Activated T-helper 1 cell treated with anti-CD3 and anti-CD28 coated beads, Interleukin-12 subunit alpha, Interleukin-12 subunit beta, Interleukin-2, Interleukin-4 antibody, amounts not matched to agents 30 ng/mL and 10 ng/mL and 1 ng/mL, durations not matched to agents 14 hours and 24 hours and 36 hours (primary cell): ENCODE measurements at regions of chr3 and their contacts with region 1.

Region 1: DNA sequence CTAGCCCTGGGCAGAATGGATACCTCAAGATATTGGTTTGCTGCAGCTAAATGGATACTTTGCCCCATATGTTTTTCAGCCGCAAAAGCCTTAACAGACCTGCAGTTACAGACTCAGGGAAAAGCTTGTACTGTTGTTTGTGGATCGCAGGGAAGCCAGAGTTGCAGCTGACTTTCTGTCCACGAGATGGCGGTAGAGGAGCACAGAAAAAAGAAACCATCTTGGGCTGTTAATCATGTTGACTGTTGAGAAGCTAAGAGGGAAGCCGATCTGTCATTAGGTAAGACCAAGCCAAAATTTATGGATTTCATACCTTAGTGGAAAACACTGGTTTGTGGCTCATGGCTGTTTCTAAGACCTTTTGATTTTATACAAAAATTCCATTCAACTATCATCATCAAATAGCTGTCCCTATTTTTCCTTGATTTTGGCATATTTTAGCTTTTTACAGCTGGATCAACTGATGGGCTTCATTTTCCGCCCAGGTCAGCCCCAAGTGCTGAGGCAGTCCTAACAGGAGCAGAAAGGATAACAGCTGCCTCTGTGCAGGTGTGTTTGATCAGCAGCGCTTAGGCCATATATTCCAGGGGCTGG is 205.7 kb upstream of the ZPLD1 start:
- DNase-seq: peak; percentile 62
- H3K4me3 Mint-ChIP-seq: no peak overlapping the region
- H3K27ac Mint-ChIP-seq: no peak overlapping the region
- H3K4me1 Mint-ChIP-seq: peaks cover 20% of the 10 kb centered on the region
- H3K27me3 Mint-ChIP-seq: peaks cover 16% of the 10 kb centered on the region

Region 2: GRCh38 chr3:101685870-101686412 is 543.2 kb before region 1 on chr3:
- intact Hi-C with region 1: loop called (anchors 5 kb)
- DNase-seq: no peak
- H3K4me3 Mint-ChIP-seq: peak overlapping the region; percentile 99
- H3K27ac Mint-ChIP-seq: peak overlapping the region; percentile 97
- H3K4me1 Mint-ChIP-seq: peaks cover 29% of the 10 kb centered on the region
- H3K27me3 Mint-ChIP-seq: no peaks in the 10 kb centered on the region

Region 3: DNA sequence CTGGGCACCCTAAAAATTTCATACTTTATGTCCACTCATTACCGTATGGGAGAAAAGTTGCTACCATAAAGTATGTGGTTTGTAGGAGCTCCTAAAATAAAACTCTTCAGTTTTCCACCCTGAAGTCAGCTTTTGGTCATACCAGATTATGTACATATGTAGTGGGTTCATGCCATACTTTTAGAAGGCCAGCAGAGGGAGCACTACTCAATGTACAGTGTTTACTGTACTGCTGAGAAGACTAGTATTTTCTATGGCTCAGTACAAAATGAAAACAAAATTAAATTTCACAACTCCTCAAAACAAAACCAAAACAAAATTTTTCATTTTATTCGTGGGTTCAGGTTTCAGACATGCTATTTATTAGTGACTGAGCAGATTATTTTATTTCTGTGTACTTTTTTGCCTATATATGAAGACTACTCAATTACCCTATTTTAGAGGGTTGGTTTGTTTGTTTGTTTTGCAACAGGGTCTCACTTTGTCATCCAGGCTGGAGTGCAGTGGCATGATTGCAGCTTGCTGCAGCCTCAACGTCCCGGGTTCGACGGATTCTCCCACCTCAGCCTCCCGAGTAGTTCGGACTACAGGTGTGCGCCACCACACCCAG is 425.9 kb before region 1 on chr3:
- intact Hi-C with region 1: loop called (anchors 1 kb)
- DNase-seq: peak; percentile 48
- H3K4me3 Mint-ChIP-seq: no peak overlapping the region
- H3K27ac Mint-ChIP-seq: no peak overlapping the region
- H3K4me1 Mint-ChIP-seq: peaks cover 22% of the 10 kb centered on the region
- H3K27me3 Mint-ChIP-seq: no peaks in the 10 kb centered on the region

Region 4: DNA sequence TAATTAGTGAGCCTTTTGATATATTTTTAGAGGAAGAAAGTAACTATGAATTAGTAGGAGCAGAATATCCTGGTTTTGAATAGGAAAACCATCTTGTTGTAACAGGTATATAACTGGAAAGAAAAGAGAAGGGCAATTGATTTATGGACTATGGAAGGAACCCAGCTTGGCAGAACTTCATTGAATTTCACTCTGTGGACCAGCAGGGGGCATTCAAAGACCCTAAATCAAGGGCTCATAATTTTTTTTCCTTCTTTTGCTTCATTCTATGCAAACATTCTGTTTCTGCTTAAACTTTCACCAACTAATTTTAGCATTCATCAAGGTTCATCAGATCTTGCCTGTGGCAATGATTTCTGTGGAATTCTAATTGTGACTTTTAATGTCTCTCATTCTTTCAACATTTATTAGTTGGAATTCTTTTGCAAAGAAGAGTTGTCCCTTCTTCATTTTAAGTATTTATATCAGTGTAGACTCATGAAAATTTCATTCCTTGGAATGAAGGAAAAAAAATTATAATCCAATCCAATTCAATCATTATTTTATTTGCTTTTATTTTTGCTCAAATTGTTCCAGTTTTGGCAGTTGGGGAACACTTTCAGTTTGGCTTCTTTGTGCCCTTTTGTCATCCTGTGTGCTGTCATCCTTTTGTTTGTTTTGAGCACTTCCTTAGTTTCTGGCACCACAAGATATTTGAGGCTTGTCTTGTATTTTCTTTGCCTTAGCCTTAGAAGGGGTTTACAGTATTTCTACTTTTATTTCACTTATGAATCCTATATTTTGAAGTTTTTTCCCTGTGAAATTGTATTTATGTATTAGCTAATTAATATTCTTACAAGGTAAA is 419.8 kb before region 1 on chr3:
- intact Hi-C with region 1: loop called (anchors 1 kb)
- DNase-seq: no peak
- H3K4me3 Mint-ChIP-seq: no peak overlapping the region
- H3K27ac Mint-ChIP-seq: peak overlapping the region; percentile 27
- H3K4me1 Mint-ChIP-seq: peaks cover 55% of the 10 kb centered on the region
- H3K27me3 Mint-ChIP-seq: no peaks in the 10 kb centered on the region

Region 5: GRCh38 chr3:101902041-101902440 is 327.1 kb before region 1 on chr3:
- intact Hi-C with region 1: no loop called
- DNase-seq: no peak
- H3K4me3 Mint-ChIP-seq: no peak overlapping the region
- H3K27ac Mint-ChIP-seq: peak overlapping the region; percentile 38
- H3K4me1 Mint-ChIP-seq: peaks cover 18% of the 10 kb centered on the region
- H3K27me3 Mint-ChIP-seq: no peaks in the 10 kb centered on the region

Region 6: DNA sequence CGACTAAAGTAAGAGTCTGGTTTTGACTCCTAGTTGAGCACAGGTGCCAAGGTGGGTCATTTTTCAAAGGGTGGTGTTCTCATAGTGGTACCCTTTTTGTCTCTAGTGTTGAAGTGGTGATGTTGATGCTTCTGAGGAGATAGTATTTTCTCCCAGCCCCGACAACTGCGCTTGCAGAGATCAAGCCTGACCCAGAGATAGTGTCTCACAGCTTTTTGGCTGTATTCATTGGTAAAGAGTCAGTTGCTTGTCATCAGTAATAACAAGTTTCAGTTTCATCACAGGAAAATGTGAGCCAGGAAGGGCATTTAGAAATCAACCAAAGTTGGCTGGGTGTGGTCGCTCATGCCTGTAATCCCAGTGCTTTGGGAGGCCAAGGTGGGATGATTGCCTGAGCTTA is 240.6 kb before region 1 on chr3:
- intact Hi-C with region 1: loop called (anchors 10 kb)
- DNase-seq: no peak
- H3K4me3 Mint-ChIP-seq: no peak overlapping the region
- H3K27ac Mint-ChIP-seq: peak overlapping the region; percentile 47
- H3K4me1 Mint-ChIP-seq: peaks cover 44% of the 10 kb centered on the region
- H3K27me3 Mint-ChIP-seq: peaks cover 11% of the 10 kb centered on the region

Region 7: GRCh38 chr3:102536456-102536855 is 307.3 kb after region 1 on chr3:
- intact Hi-C with region 1: loop called (anchors 1 kb)
- DNase-seq: no peak
- H3K4me3 Mint-ChIP-seq: no peak overlapping the region
- H3K27ac Mint-ChIP-seq: no peak overlapping the region
- H3K4me1 Mint-ChIP-seq: no peaks in the 10 kb centered on the region
- H3K27me3 Mint-ChIP-seq: peaks cover 9% of the 10 kb centered on the region

Region 8: DNA sequence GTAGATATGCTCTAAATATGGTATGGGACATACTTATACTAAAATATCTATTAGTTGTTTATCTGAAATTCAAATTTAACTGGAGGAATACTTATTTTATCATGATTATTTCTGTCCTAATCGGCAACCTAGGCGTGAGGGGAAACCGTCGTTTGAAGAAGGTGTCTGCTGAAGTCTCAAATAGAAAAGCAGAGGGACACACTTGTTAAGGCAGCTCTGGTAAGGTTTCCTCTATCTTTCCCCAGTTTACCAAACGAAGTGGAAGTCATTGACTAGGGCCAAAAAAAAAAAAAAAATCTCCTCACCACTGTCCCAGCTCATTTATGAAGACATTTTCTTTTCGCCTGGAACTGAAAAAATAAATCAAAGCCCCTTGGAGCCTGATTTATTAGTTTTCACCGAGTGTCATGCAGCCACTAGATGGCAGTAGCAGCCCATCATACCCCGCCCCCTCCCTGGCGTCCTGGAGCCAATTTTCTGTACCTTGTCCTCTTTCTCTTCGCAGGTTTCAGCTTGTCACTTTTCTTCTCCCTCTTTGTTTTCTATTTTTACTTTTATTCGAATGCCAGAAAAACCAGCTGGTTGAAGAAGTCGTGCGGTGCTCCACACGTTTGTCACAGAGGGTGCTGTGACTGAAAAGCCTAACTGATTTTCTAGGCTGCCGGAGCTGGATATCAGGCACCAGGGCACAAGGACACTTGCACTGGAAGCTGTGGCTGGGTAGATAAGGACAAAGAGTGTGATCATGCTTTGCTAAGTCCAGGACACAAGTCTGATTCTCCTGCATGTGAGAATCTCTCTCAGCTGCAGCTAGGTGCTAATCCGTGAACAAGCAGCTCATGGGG is 444.3 kb after region 1 on chr3:
- intact Hi-C with region 1: loop called (anchors 1 kb)
- DNase-seq: peak; percentile 5
- H3K4me3 Mint-ChIP-seq: no peak overlapping the region
- H3K27ac Mint-ChIP-seq: no peak overlapping the region
- H3K4me1 Mint-ChIP-seq: no peaks in the 10 kb centered on the region
- H3K27me3 Mint-ChIP-seq: peaks cover 12% of the 10 kb centered on the region